ENCODE measurements at regions of chr1 and their contacts with region 1.

Region 1: GRCh38 chr1:169933984-169934725 is 40.5 kb upstream of the SCYL3 start:
- DNase-seq: no peak
- ATAC-seq: no peak
- H3K4me3 ChIP-seq: no peak overlapping the region
- H3K27ac ChIP-seq: no peak overlapping the region
- H3K4me1 ChIP-seq: no peaks in the 10 kb centered on the region
- H3K27me3 ChIP-seq: no peaks in the 10 kb centered on the region
- CTCF ChIP-seq: no peak
- EP300 ChIP-seq: no peak
- POLR2A ChIP-seq: no peak
- RAD21 ChIP-seq: no peak

Region 2: DNA sequence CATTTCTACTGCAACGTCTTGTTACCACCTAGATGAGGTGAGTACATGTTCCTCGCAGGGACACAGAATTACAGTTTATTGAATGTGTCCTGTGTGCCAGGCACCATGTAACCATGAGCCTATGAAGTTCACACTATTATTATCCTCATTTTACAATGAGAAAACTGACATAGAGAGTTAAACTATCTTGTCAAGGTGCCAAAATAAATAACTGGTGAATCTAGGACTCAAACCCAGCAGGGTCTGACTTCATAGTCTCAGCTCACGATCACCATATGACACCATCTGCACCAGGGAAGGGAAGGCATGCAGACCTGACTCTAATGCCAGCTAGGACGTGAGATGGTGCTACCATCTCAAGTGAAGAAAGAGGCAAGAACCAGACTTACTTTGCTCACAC is 202.7 kb before region 1 on chr1:
- CTCF ChIA-PET with region 1: no interaction called
- POLR2A ChIA-PET with region 1: no interaction called
- in situ Hi-C with region 1: no loop called
- intact Hi-C with region 1: no loop called
- DNase-seq: no peak
- ATAC-seq: no peak
- H3K4me3 ChIP-seq: no peak overlapping the region
- H3K27ac ChIP-seq: no peak overlapping the region
- H3K4me1 ChIP-seq: no peaks in the 10 kb centered on the region
- H3K27me3 ChIP-seq: peaks cover 4 to 8% of the 10 kb centered on the region in 2 experiments; a peak in 3 of 5 replicates
- CTCF ChIP-seq: no peak
- EP300 ChIP-seq: no peak
- POLR2A ChIP-seq: no peak
- RAD21 ChIP-seq: no peak

Region 3: GRCh38 chr1:169899519-169900217 is 34.5 kb before region 1 on chr1:
- CTCF ChIA-PET with region 1: no interaction called
- POLR2A ChIA-PET with region 1: no interaction called
- in situ Hi-C with region 1: no loop called
- intact Hi-C with region 1: no loop called
- DNase-seq: no peak
- ATAC-seq: no peak
- H3K4me3 ChIP-seq: no peak overlapping the region
- H3K27ac ChIP-seq: no peak overlapping the region
- H3K4me1 ChIP-seq: peaks cover 0 to 18% of the 10 kb centered on the region in 2 experiments; a peak in 3 of 5 replicates
- H3K27me3 ChIP-seq: 0 out of 5 replicates have a peak, but pooled peaks cover 0 to 2% of the 10 kb centered on the region in 2 experiments
- CTCF ChIP-seq: no peak
- EP300 ChIP-seq: no peak
- POLR2A ChIP-seq: no peak
- RAD21 ChIP-seq: no peak

Region 4: DNA sequence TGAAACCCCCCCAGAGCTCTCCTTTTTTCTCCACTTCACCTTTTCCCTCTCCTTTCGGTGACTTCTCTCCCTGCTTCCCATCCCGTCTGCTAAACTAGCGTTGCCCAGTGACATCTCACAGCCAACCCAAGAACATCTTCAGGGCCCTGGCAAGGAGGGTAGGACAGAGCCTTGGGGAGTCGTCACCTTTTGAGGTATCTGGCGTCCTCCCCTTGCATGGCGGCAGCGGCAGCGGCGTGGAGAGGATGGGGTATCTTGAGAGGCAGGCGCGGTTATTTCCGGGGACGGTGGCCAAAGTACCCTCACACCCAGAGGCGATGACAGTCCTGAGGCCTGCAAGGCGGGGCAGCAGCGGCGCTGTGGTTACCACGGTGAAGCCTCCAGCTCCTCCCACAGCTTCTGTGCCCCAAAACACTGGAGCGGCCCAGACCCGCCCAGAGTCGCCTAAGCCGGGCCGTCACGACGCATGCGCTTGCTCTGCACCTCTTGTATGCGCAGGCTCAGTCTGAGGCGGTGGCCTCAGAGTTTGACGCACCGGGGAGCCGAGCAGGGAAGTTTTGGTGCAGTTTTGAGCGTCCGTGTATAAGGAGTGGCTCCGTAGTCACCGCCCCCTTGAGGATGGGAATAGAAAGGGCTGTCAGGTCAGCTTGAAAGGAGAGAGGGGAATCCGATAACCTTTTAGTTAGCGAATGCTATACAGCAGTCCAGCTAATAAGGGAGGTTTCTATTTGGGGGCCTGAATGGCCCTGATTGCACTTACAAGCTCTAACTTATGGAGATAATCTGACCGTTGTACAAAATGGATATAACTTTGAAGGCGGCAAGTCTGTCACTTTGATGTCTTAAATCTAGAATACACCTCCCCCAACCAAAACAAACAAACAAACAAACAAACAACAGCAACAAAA is 140.3 kb after region 1 on chr1 and contains the start of gene KIFAP3:
- CTCF ChIA-PET with region 1: no interaction called
- POLR2A ChIA-PET with region 1: no interaction called
- in situ Hi-C with region 1: no loop called
- intact Hi-C with region 1: loop called (anchors 5 kb)
- DNase-seq: peak; percentile 95 to 100 (median 97)
- ATAC-seq: peak; percentile 99
- H3K4me3 ChIP-seq: peak within 1 kb of the TSS; percentile 59
- H3K27ac ChIP-seq: peak within 1 kb of the TSS; percentile 54
- H3K4me1 ChIP-seq: peaks cover 6% of the 10 kb centered on the region in 2 experiments; a peak in 4 of 5 replicates
- H3K27me3 ChIP-seq: no peaks in the 10 kb centered on the region
- CTCF ChIP-seq: peak; percentile 56 to 75 (median 75)
- EP300 ChIP-seq: no peak
- POLR2A ChIP-seq: peak; percentile 65
- RAD21 ChIP-seq: peak; percentile 56 to 65
- polyA plus RNA-seq, gene KIFAP3: 11.7 to 16.3 TPM

Measured in K562 (cell line).